H1 (cell line): ENCODE measurements at regions of chr4 and their contacts with region 1.

Region 1: GRCh38 chr4:153095448-153096204 is 108.6 kb upstream of the TRIM2 start:
- DNase-seq: no peak
- H3K4me3 ChIP-seq: no peak overlapping the region
- H3K27ac ChIP-seq: no peak overlapping the region
- H3K4me1 ChIP-seq: 0 out of 7 replicates have a peak, but pooled peaks cover 0 to 3% (median 0%) of the 10 kb centered on the region in 4 experiments
- H3K27me3 ChIP-seq: no peaks in the 10 kb centered on the region
- CTCF ChIP-seq: no peak
- EP300 ChIP-seq: no peak
- POLR2A ChIP-seq: no peak
- RAD21 ChIP-seq: no peak

Region 2: GRCh38 chr4:152680988-152681603 is 414.5 kb before region 1 on chr4:
- CTCF ChIA-PET with region 1: no interaction called
- POLR2A ChIA-PET with region 1: no interaction called
- DNase-seq: no peak
- H3K4me3 ChIP-seq: no peak overlapping the region
- H3K27ac ChIP-seq: no peak overlapping the region
- H3K4me1 ChIP-seq: peaks cover 0 to 11% (median 7%) of the 10 kb centered on the region in 4 experiments; a peak in 4 of 7 replicates
- H3K27me3 ChIP-seq: peaks cover 0 to 4% (median 2%) of the 10 kb centered on the region in 4 experiments; a peak in 2 of 7 replicates
- CTCF ChIP-seq: no peak
- EP300 ChIP-seq: no peak
- POLR2A ChIP-seq: no peak
- RAD21 ChIP-seq: no peak

Region 3: DNA sequence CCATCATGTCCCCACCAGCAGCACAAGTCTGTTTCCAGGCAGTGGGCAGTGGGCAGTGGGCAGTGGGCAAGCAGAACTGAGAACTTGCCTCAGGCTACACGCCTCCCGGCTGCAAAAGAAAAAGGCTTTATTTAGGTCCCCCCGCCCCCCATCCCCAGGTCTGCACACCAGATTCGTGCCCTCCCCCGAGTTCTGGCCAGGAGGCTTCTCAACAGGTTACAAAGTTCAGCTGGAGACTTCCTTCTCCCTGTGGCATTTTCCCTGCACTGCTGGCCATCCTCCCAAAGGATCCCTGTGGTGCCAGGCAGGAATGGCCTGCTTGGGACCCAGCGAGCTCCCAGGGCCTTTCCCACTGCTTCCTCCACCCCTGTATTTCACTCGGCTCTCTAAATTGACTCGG is 11.6 kb after region 1 on chr4:
- CTCF ChIA-PET with region 1: interaction called, 13 read pairs
- POLR2A ChIA-PET with region 1: interaction called, 4 read pairs
- DNase-seq: no peak
- H3K4me3 ChIP-seq: no peak overlapping the region
- H3K27ac ChIP-seq: no peak overlapping the region
- H3K4me1 ChIP-seq: peaks cover 0 to 4% (median 0%) of the 10 kb centered on the region in 4 experiments; a peak in 1 of 7 replicates
- H3K27me3 ChIP-seq: no peaks in the 10 kb centered on the region; a peak in 1 of 7 replicates
- CTCF ChIP-seq: no peak
- EP300 ChIP-seq: no peak
- POLR2A ChIP-seq: no peak
- RAD21 ChIP-seq: no peak